B cell (primary cell): ENCODE measurements at regions of chr12 and their contacts with region 1.

Region 1: GRCh38 chr12:13864081-13864673 is 117.2 kb downstream of the GRIN2B start:
- DNase-seq: peak; percentile 73
- ATAC-seq: peak; percentile 82
- H3K4me3 ChIP-seq: no peak overlapping the region
- H3K4me3 Mint-ChIP-seq: no peak overlapping the region
- H3K27ac ChIP-seq: no peak overlapping the region
- H3K27ac Mint-ChIP-seq: no peak overlapping the region
- H3K4me1 ChIP-seq: no peaks in the 10 kb centered on the region
- H3K4me1 Mint-ChIP-seq: no peaks in the 10 kb centered on the region
- H3K27me3 ChIP-seq: peaks cover 0 to 16% (median 3%) of the 10 kb centered on the region in 4 experiments
- H3K27me3 Mint-ChIP-seq: peaks cover 52% of the 10 kb centered on the region
- CTCF ChIP-seq: peak; percentile 99

Region 2: GRCh38 chr12:14111230-14111865 is 247.2 kb after region 1 on chr12:
- CTCF ChIA-PET with region 1: interaction called, 7 read pairs
- POLR2A ChIA-PET with region 1: no interaction called
- intact Hi-C with region 1: loop called (anchors 1 kb)
- DNase-seq: peak; percentile 82
- ATAC-seq: peak; percentile 97
- H3K4me3 ChIP-seq: no peak overlapping the region
- H3K4me3 Mint-ChIP-seq: peak overlapping the region; percentile 26
- H3K27ac ChIP-seq: no peak overlapping the region
- H3K27ac Mint-ChIP-seq: peak overlapping the region; percentile 67
- H3K4me1 ChIP-seq: peaks cover 13% of the 10 kb centered on the region in 2 donors
- H3K4me1 Mint-ChIP-seq: peaks cover 13% of the 10 kb centered on the region
- H3K27me3 ChIP-seq: no peaks in the 10 kb centered on the region
- H3K27me3 Mint-ChIP-seq: no peaks in the 10 kb centered on the region
- CTCF ChIP-seq: peak; percentile 76

Region 3: DNA sequence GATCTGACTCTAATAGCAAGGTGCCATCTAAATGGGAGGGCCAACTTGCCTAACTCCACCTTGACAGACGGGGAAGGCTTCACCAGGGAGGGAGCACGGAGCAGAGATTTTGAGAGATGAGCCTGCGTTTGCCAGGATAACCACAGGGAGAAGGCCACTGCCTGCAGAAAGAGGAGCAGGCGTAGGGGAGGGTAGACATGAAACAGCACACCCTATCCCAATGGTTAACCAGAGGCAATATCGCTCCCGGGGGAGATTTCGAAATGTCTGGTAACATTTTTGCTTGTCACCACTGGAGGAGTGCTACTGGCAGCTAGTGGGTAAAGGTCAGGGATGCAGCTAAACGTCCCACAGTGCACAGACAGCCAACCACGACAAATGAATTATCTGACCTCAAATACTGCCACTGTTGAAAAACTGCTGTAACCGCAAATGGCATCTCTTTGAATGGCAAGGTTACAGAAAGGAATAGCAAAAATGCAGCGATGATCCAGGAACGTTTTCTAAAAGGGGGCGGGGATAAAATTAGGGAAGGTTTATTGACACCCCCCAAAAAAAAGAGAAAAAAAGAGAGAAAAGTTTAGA is 375.3 kb after region 1 on chr12:
- CTCF ChIA-PET with region 1: no interaction called
- POLR2A ChIA-PET with region 1: no interaction called
- intact Hi-C with region 1: no loop called
- DNase-seq: peak; percentile 80
- ATAC-seq: peak; percentile 79
- H3K4me3 ChIP-seq: peak overlapping the region; percentile 26 to 53 (median 39)
- H3K4me3 Mint-ChIP-seq: peak overlapping the region; percentile 88
- H3K27ac ChIP-seq: peak overlapping the region; percentile 96 to 99
- H3K27ac Mint-ChIP-seq: peak overlapping the region; percentile 100
- H3K4me1 ChIP-seq: peaks cover 34 to 35% of the 10 kb centered on the region in 2 donors
- H3K4me1 Mint-ChIP-seq: peaks cover 35% of the 10 kb centered on the region
- H3K27me3 ChIP-seq: no peaks in the 10 kb centered on the region
- H3K27me3 Mint-ChIP-seq: no peaks in the 10 kb centered on the region
- CTCF ChIP-seq: no peak